Vagina (tissue), 2 donors: ENCODE measurements at regions of chr14 and their contacts with region 1.

Region 1: DNA sequence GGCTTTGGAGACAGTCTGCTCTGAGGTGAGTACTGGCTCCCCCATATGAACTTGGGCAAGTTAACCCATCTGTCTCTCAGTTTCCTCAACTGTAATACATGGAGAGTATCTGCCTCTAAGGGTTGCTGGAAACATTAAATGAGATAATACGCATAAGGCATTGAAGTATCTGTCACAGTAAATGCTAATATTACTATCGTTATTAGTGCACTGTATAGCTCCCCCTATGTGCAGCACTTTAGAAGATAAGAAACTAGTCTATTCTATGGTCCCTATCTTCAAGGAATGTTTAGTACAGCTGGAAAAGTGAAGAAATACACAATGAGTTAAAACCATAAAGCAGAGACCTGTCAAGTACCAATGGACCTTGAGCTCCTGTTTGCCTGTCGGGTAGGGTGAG is 51.7 kb upstream of the CFL2 start:
- DNase-seq: no peak
- H3K4me3 ChIP-seq: no peak overlapping the region
- H3K27ac ChIP-seq: no peak overlapping the region
- H3K4me1 ChIP-seq: no peaks in the 10 kb centered on the region
- H3K27me3 ChIP-seq: no peaks in the 10 kb centered on the region
- CTCF ChIP-seq: no peak
- POLR2A ChIP-seq: no peak

Region 2: GRCh38 chr14:36313898-36314297 is 1547.8 kb after region 1 on chr14:
- intact Hi-C with region 1: loop called (anchors 5 kb)
- DNase-seq: no peak
- H3K4me3 ChIP-seq: no peak overlapping the region
- H3K27ac ChIP-seq: no peak overlapping the region
- H3K4me1 ChIP-seq: peaks cover 18% of the 10 kb centered on the region
- H3K27me3 ChIP-seq: no peaks in the 10 kb centered on the region
- CTCF ChIP-seq: no peak
- POLR2A ChIP-seq: no peak